HEK293T (cell line): ENCODE measurements at regions of chr2 and their contacts with region 1.

Region 1: GRCh38 chr2:25606892-25607291 is 66.5 kb downstream of the DTNB start:
- DNase-seq: peak; percentile 22

Region 2: DNA sequence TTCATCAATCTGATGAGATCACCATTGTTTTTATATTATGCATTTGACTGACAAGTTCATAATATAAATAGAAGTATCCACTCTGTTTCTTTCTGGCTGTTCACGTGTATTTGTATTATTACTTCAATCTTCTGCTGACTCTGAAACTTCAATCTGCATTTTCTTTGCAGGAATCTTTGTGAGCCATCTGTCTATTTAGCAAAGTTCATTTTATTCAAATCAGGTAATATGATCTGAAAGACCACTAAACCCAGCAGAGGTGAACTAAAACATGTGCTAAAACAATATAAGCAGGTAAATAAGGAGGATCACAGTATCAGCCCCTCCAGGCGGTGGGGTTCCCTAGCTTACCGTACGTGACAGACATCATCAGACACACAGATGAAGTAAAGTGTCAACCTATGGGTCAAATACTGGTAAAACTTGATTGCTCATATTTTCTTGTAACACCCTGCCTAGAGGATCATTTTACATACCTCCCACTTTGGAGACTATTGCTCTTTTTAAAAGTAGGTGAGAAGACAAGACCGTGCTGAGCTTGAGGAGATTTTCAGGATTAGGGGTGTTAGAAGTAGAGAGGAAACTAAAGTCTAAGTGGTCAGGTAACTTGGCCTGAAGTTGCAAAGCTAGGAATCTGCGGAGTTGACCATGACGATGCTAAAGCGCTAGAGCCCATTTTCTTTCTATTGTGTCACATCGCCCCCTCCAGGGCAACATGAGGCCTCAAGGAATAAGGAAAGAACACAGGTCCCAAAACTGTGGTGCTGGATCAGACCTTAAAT is 57.5 kb after region 1 on chr2:
- CTCF ChIA-PET with region 1: interaction called, 47 read pairs
- POLR2A ChIA-PET with region 1: interaction called, 10 read pairs
- DNase-seq: peak; percentile 70